ENCODE measurements at regions of chr1 and their contacts with region 1.

Region 1: DNA sequence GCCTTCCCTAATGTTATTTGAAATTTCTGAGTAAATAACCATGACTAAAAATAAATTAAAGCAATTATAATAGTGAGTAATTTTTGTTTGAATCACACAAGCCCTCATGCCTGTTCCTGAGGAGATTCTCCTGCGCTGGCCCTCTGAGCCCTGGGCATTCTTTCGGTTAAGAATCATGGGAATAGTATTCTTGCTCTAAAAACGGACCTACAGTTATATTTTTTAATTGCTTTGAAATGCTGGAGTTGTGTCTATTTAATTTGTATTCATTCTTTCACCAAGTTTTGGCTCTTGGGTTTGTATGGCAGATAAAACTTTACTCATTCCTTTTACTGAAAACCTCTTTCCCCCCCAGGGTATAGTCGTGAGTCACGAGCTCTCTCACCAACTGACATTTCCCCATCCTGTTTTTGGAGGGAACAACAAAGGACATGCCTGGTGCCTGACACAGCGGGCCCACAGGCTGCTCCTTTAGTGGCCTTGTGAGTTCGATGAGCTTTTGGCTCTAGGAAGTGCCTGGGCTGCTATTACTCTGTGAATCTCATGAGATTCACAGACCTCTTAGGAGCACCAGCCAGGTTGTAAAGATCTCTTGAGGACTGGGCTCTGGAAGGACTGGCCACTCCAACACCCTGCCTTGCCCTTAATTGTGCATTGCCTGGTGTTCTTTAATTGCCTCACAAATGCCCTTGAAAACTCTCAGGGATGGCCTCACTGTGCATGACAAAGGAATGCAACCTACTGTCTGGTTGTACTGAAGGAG is 58.6 kb downstream of the DDR2 start:
- DNase-seq: peak; percentile 94
- H3K4me3 ChIP-seq: no peak overlapping the region
- H3K27ac ChIP-seq: peak overlapping the region; percentile 64
- H3K4me1 ChIP-seq: peaks cover 31% of the 10 kb centered on the region
- H3K27me3 ChIP-seq: no peaks in the 10 kb centered on the region
- CTCF ChIP-seq: no peak
- POLR2A ChIP-seq: no peak

Region 2: GRCh38 chr1:162471290-162471853 is 219.5 kb before region 1 on chr1:
- CTCF ChIA-PET with region 1: no interaction called
- POLR2A ChIA-PET with region 1: no interaction called
- dilution Hi-C with region 1: no loop called
- intact Hi-C with region 1: no loop called
- DNase-seq: no peak
- H3K4me3 ChIP-seq: no peak overlapping the region
- H3K27ac ChIP-seq: no peak overlapping the region
- H3K4me1 ChIP-seq: no peaks in the 10 kb centered on the region
- H3K27me3 ChIP-seq: peaks cover 0 to 5% of the 10 kb centered on the region in 2 experiments
- CTCF ChIP-seq: no peak
- POLR2A ChIP-seq: no peak

Region 3: DNA sequence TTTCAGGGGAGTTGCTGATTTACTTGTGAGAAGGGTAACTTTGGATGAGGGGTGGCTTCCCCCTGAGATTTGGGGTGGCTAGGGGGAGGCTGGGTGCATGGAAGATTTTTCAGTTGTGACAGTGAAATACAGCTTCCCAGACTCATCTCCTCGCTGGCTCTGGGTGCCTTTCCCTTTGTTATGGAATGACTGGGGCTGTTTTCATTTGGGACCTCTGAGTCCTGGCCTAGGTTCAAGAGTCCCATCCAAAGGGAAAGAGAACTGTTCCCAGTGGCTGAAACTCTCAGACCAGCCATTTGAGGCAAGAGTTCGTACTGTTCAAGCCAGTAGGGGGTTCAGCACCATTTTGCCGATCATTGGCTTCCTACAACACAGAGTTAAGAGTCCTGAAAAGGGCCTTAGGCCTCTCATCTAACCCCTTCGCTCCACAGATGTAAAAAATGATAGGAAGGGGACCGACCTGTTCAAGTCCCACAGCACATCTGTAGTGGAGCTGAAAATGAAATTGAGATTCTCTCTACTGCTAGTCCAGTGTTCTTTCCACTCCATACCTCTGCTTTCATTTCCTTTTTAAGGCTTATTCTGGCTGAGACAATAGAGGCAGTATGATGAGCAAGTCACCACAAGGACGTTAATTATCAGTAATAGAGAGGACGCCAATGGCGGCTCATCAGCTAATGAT is 57.6 kb before region 1 on chr1:
- CTCF ChIA-PET with region 1: interaction called, 6 read pairs
- POLR2A ChIA-PET with region 1: interaction called, 5 read pairs
- dilution Hi-C with region 1: no loop called
- intact Hi-C with region 1: loop called (anchors 2 kb)
- DNase-seq: peak; percentile 75
- H3K4me3 ChIP-seq: peak overlapping the region; percentile 51 to 94 (median 81)
- H3K27ac ChIP-seq: peak overlapping the region; percentile 69
- H3K4me1 ChIP-seq: peaks cover 58% of the 10 kb centered on the region
- H3K27me3 ChIP-seq: no peaks in the 10 kb centered on the region
- CTCF ChIP-seq: peak in 1 of 2 donors; percentile 36
- POLR2A ChIP-seq: peak; percentile 25

Region 4: GRCh38 chr1:162678439-162678838 is 12.4 kb before region 1 on chr1:
- CTCF ChIA-PET with region 1: interaction called, 20 read pairs
- POLR2A ChIA-PET with region 1: interaction called, 3 read pairs
- dilution Hi-C with region 1: no loop called
- intact Hi-C with region 1: loop called (anchors 1 kb)
- DNase-seq: peak; percentile 53
- H3K4me3 ChIP-seq: no peak overlapping the region
- H3K27ac ChIP-seq: no peak overlapping the region
- H3K4me1 ChIP-seq: peaks cover 53% of the 10 kb centered on the region
- H3K27me3 ChIP-seq: no peaks in the 10 kb centered on the region
- CTCF ChIP-seq: no peak
- POLR2A ChIP-seq: no peak

Region 5: DNA sequence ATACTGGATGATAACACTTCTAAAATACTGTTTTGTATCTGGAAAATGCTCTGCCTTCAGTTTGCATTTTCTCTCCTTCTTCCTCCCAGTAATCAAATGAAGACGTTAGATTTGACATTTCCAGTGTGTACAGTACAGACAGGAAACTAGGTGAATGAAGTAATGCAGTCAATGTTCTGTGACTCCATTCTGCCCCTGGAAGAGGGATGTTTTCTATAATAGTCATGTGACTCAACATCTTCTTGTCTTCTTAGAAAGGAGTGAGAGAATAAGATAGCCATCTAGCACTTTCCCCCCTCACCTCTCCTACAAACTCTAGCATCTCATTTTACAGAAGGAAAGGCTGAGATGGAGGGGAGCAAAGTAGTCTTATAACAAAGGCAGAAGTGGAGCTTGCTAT is 19.0 kb after region 1 on chr1:
- CTCF ChIA-PET with region 1: interaction called, 8 read pairs
- POLR2A ChIA-PET with region 1: no interaction called
- dilution Hi-C with region 1: no loop called
- intact Hi-C with region 1: loop called (anchors 1 kb)
- DNase-seq: peak; percentile 29
- H3K4me3 ChIP-seq: no peak overlapping the region
- H3K27ac ChIP-seq: no peak overlapping the region
- H3K4me1 ChIP-seq: peaks cover 27% of the 10 kb centered on the region
- H3K27me3 ChIP-seq: no peaks in the 10 kb centered on the region
- CTCF ChIP-seq: no peak
- POLR2A ChIP-seq: no peak

Region 6: GRCh38 chr1:162740755-162741154 is 49.9 kb after region 1 on chr1:
- CTCF ChIA-PET with region 1: no interaction called
- POLR2A ChIA-PET with region 1: no interaction called
- dilution Hi-C with region 1: no loop called
- intact Hi-C with region 1: no loop called
- DNase-seq: no peak
- H3K4me3 ChIP-seq: no peak overlapping the region
- H3K27ac ChIP-seq: no peak overlapping the region
- H3K4me1 ChIP-seq: no peaks in the 10 kb centered on the region
- H3K27me3 ChIP-seq: no peaks in the 10 kb centered on the region
- CTCF ChIP-seq: no peak
- POLR2A ChIP-seq: no peak

Region 7: DNA sequence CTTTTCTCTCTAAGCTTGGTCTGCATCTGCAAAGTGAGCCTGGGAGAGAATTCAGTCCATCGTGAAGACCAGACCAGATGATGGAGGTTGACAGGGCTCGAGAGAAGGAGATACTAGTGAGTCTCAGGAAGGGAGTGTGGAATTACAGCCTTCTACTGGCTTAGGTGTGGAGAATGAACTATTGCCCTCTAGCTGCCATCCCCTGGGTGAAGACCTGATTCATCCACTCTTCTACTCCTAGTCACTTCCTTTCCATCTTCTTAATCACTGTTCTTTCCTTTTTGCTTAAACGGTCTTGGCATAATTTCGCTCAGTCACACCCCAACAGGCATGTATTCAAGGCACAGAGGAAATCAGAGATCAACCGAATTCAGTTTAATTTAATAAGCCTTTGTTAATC is 65.7 kb after region 1 on chr1:
- CTCF ChIA-PET with region 1: no interaction called
- POLR2A ChIA-PET with region 1: no interaction called
- dilution Hi-C with region 1: no loop called
- intact Hi-C with region 1: loop called (anchors 2 kb)
- DNase-seq: peak; percentile 47
- H3K4me3 ChIP-seq: no peak overlapping the region
- H3K27ac ChIP-seq: no peak overlapping the region
- H3K4me1 ChIP-seq: peaks cover 27% of the 10 kb centered on the region
- H3K27me3 ChIP-seq: no peaks in the 10 kb centered on the region
- CTCF ChIP-seq: no peak
- POLR2A ChIP-seq: no peak

Region 8: GRCh38 chr1:162951553-162952315 is 260.9 kb after region 1 on chr1:
- CTCF ChIA-PET with region 1: no interaction called
- POLR2A ChIA-PET with region 1: no interaction called
- dilution Hi-C with region 1: no loop called
- intact Hi-C with region 1: no loop called
- DNase-seq: peak; percentile 6
- H3K4me3 ChIP-seq: no peak overlapping the region
- H3K27ac ChIP-seq: no peak overlapping the region
- H3K4me1 ChIP-seq: peaks cover 10% of the 10 kb centered on the region
- H3K27me3 ChIP-seq: no peaks in the 10 kb centered on the region
- CTCF ChIP-seq: no peak
- POLR2A ChIP-seq: no peak

Region 9: GRCh38 chr1:162973381-162973795 is 282.5 kb after region 1 on chr1:
- CTCF ChIA-PET with region 1: no interaction called
- POLR2A ChIA-PET with region 1: no interaction called
- dilution Hi-C with region 1: no loop called
- intact Hi-C with region 1: no loop called
- DNase-seq: peak; percentile 84
- H3K4me3 ChIP-seq: no peak overlapping the region
- H3K27ac ChIP-seq: peak overlapping the region; percentile 46
- H3K4me1 ChIP-seq: peaks cover 12% of the 10 kb centered on the region
- H3K27me3 ChIP-seq: no peaks in the 10 kb centered on the region
- CTCF ChIP-seq: no peak
- POLR2A ChIP-seq: no peak